RWPE1 (cell line): ENCODE measurements at regions of chr17 and their contacts with region 1.

Region 1: DNA sequence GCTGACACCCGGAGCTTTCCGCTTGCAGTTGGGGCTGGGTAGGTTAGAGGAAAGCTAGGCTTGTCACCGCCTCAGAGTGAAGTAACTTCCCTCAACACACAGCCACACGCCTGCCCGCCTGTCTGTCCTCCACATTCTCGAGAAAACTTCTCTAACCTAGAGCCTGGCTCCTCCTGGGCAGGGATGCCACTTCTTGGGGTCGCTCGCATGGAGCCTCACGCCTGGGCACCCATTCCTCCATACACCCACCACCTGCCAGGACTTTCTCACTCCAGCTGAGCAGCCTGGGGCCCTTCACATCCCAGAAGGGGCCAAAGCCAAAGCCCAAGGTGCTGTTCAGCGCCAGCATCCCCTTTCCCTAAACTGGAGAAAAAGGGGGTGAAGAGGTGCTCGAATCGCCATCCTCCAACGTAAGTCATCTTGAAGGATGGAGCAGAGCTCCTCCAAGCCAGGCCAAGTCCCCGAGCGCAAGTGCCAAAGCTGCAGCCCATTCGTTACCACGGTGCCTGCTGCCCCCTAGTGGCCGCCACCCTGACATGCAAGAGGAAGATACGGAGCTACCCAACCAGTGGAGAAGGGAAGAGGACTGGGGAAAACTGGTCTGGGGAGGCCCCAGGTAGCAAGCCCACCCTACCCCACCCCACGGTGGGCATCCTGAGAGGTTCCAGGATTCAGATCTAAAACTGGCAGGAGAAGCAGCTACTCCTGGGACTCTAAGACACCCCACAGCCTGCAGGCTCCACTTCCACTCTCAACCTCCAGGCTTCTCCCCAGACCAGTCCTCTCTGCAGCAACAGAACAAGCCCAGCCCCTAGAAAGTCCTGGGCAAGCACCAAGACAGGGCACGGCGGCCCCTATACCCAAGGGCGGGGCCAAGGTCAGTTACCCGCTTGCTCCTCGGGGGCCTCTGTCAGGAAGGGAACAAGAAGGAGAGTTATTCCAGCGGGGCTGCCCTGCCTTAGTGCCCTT is 63.1 kb downstream of the MYO18A start:
- DNase-seq: peak; percentile 56
- H3K27ac ChIP-seq: peak overlapping the region; percentile 37
- CTCF ChIP-seq: peak; percentile 86

Region 2: GRCh38 chr17:28967221-28968140 is 149.6 kb before region 1 on chr17:
- CTCF ChIA-PET with region 1: interaction called, 36 read pairs
- POLR2A ChIA-PET with region 1: no interaction called
- DNase-seq: no peak
- H3K27ac ChIP-seq: no peak overlapping the region
- CTCF ChIP-seq: no peak

Region 3: GRCh38 chr17:29133146-29133713 is 16.1 kb after region 1 on chr17:
- CTCF ChIA-PET with region 1: interaction called, 18 read pairs
- POLR2A ChIA-PET with region 1: no interaction called
- DNase-seq: no peak
- H3K27ac ChIP-seq: peak overlapping the region; percentile 67
- CTCF ChIP-seq: no peak

Region 4: DNA sequence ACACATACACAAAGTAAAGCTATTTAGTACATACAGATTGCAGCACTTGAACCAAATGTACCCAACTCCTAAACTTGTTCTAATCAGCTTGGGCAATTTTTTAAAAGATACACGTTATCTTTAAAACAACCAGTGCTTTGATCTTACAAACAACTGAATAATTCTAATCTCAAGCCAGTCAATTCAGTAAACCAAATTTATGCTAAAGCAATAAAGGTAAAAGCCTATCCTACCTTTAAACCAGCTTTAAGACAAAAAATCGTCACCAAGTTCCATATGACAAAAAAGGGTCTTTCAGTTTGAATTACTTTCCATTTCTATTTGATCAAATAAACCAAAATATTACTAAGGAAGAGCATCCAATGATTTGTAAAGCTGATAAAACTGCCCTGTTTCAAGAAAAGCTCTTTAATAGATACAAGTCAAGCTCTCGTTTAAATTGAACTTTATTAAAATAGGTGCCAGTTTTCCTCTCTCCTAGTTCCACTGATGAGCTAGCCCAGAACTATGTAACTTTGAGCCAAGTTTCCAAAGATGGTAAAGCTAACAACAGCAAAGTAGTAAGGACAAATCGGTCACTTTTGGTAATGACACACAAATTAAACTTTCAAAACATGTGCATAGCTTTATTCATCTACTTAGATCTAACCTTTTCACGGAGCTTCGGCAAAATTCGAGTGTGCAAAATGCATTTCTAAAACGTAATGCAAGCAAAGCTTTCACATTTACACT is 139.8 kb after region 1 on chr17:
- CTCF ChIA-PET with region 1: interaction called, 13 read pairs
- POLR2A ChIA-PET with region 1: no interaction called
- DNase-seq: no peak
- H3K27ac ChIP-seq: no peak overlapping the region
- CTCF ChIP-seq: no peak

Region 5: GRCh38 chr17:29293890-29294579 is 176.9 kb after region 1 on chr17 and contains the start of gene NUFIP2:
- CTCF ChIA-PET with region 1: interaction called, 3 read pairs
- POLR2A ChIA-PET with region 1: interaction called, 15 read pairs
- DNase-seq: peak; percentile 97
- H3K27ac ChIP-seq: peak within 1 kb of the TSS; percentile 98
- CTCF ChIP-seq: no peak